Activated CD8-positive, alpha-beta memory T cell treated with anti-CD3 and anti-CD28 coated beads, Interleukin-2, amount 10 ng/mL, durations not matched to agents 7 days and 5 days (primary cell): ENCODE measurements at regions of chr7 and their contacts with region 1.

Region 1: DNA sequence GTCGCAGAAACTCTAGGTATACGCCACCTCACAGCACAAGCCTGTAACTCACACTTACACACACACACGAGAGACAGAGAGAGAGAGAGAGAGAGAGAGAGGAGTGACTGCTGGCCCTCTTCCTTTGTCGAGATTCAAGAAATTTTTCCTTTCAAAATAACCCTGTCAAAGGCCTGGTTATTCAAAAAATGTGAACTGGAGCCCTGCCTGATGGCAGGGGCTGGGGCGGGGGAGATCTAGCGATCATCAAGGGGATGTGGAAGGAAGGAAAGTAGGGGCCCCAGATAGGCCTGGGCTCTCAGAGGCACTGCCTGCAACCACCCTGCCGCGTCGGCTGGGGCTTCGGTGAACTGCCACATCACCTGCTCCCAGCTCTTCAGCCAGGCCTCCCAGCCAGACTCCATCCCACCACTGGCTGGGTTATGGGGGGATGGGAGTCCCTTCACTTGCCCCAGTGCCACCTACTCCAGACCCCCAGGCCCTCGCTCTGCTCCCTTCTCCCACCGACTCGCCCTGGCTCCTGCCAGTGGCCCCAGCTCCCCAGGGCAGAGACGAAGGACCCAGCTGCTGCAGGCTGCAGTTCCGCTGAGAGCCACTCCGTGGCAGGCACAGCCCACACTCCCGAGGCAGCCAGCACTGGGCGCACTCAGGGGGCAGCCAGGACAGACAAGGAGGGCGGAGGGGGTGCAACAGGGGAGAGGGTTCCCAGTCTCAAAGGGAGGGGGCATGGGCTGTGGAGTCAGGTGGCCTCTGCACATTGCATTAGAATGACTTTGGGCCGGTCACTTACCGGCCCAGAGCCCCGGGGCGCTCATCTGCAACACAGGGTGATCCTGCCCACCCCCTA is 15.3 kb downstream of the KCNH2 start:
- DNase-seq: peak; percentile 62
- ATAC-seq: peak; percentile 89
- H3K4me3 Mint-ChIP-seq: no peak overlapping the region
- H3K27ac Mint-ChIP-seq: peak overlapping the region; percentile 32
- H3K4me1 Mint-ChIP-seq: peaks cover 3% of the 10 kb centered on the region
- H3K27me3 Mint-ChIP-seq: peaks cover 31% of the 10 kb centered on the region

Region 2: GRCh38 chr7:150937848-150938561 is 24.8 kb before region 1 on chr7:
- CTCF ChIA-PET with region 1: interaction called, 10 read pairs
- DNase-seq: no peak
- ATAC-seq: peak; percentile 58
- H3K4me3 Mint-ChIP-seq: no peak overlapping the region
- H3K27ac Mint-ChIP-seq: no peak overlapping the region
- H3K4me1 Mint-ChIP-seq: peaks cover 28% of the 10 kb centered on the region
- H3K27me3 Mint-ChIP-seq: peaks cover 13% of the 10 kb centered on the region

Region 3: DNA sequence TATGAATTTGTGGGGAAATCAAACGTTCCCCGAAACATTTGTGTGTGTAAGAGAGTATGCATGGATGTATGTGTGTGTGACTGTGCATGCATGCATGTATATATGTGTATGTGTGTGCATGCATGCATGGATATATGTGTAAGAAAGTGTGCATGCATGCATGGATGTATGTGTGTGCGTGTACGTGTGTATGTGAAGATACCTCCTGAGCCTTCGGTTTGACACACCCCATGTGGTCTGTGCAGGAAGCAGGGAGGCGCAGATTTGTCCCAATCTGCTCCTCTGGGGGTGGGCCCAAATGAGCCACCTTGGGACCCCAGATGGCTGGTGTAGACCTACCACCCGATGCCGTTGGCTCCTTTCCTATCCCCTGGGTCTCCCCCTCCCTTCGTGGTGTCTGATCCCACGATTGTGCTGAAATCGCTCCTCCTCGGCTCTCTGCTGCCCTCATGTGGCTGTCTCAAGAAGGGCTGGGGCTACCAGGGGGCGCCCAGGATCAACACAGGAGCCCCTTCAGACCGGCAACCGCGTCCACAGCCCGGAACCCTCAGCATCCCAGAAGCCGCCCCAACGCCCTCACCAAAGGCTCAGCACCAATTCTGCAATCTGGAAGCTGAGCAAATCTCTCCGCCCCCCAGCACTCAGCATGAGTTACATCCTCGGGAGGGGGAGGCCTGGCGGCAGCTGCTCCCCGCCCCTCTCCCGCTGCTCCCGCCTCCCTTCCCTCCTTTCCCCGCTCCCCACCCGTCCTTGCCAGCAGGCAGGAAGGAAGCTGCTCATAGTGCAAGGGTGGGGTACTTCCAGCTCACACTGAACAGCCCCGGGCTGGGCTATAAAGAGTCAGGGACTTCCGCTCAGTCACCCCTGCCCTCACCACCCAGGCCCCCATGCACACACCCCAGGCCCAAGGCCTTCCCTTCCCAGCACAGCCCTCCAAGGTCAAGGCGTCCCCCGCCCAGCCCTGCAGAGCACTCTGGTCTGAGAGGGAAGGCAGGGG is 25.8 kb after region 1 on chr7:
- CTCF ChIA-PET with region 1: interaction called, 58 read pairs
- DNase-seq: peak; percentile 74
- ATAC-seq: peak; percentile 79
- H3K4me3 Mint-ChIP-seq: peak overlapping the region; percentile 34
- H3K27ac Mint-ChIP-seq: no peak overlapping the region
- H3K4me1 Mint-ChIP-seq: peaks cover 8% of the 10 kb centered on the region
- H3K27me3 Mint-ChIP-seq: peaks cover 39% of the 10 kb centered on the region

Region 4: GRCh38 chr7:151008511-151009323 is 45.9 kb after region 1 on chr7:
- CTCF ChIA-PET with region 1: interaction called, 61 read pairs
- DNase-seq: peak; percentile 89
- ATAC-seq: peak; percentile 73
- H3K4me3 Mint-ChIP-seq: peak overlapping the region; percentile 81
- H3K27ac Mint-ChIP-seq: peak overlapping the region; percentile 90
- H3K4me1 Mint-ChIP-seq: peaks cover 48% of the 10 kb centered on the region
- H3K27me3 Mint-ChIP-seq: no peaks in the 10 kb centered on the region

Region 5: GRCh38 chr7:151017953-151018420 is 55.2 kb after region 1 on chr7:
- CTCF ChIA-PET with region 1: interaction called, 61 read pairs
- DNase-seq: peak; percentile 84
- ATAC-seq: peak; percentile 64
- H3K4me3 Mint-ChIP-seq: peak overlapping the region; percentile 69
- H3K27ac Mint-ChIP-seq: peak overlapping the region; percentile 52
- H3K4me1 Mint-ChIP-seq: peaks cover 45% of the 10 kb centered on the region
- H3K27me3 Mint-ChIP-seq: peaks cover 39% of the 10 kb centered on the region

Region 6: DNA sequence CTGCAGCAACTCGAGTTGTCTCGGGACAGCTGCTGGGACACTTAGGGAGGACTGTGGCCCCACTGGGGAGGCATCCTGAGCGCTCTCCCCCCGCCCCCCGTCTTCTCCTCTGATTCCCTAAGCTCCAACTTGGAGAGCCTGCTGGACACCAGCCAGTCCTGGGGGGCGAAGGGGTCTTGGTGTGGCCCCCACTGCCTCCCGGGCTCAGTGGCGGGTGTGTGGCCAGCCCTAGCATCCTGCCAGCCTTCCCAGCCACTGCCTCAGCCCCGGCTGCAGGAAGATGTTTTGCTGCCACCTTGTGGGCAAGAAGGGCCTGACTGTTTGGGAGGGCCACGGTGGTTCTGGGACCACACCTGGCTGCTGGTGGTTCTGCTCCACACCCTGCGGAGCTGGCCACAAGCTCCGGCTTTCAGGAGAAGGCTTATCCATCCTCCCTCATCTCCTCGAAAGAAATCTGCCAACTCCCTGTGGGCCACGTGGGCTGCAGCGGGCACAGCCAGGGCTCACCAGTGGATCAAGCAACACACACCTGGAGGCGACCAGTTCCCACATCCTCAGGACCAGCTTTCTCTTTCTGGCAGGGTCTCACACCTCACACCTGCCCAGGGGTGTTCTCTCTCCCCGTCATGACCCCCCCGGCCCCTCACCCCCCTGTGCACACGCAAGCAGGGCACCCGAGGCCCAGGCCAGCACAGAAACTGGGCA is 148.3 kb after region 1 on chr7:
- CTCF ChIA-PET with region 1: interaction called, 29 read pairs
- DNase-seq: peak; percentile 84
- ATAC-seq: peak; percentile 85
- H3K4me3 Mint-ChIP-seq: no peak overlapping the region
- H3K27ac Mint-ChIP-seq: no peak overlapping the region
- H3K4me1 Mint-ChIP-seq: peaks cover 2% of the 10 kb centered on the region
- H3K27me3 Mint-ChIP-seq: peaks cover 16% of the 10 kb centered on the region

Region 7: GRCh38 chr7:151336027-151336708 is 373.4 kb after region 1 on chr7:
- CTCF ChIA-PET with region 1: no interaction called
- DNase-seq: no peak
- ATAC-seq: no peak
- H3K4me3 Mint-ChIP-seq: no peak overlapping the region
- H3K27ac Mint-ChIP-seq: no peak overlapping the region
- H3K4me1 Mint-ChIP-seq: peaks cover 22% of the 10 kb centered on the region
- H3K27me3 Mint-ChIP-seq: peaks cover 2% of the 10 kb centered on the region